ENCODE measurements at regions of chr12 and their contacts with region 1.

Region 1: GRCh38 chr12:113174461-113175384 is 10.6 kb downstream of the DDX54 start:
- DNase-seq: no peak
- H3K4me3 ChIP-seq: no peak overlapping the region
- H3K27ac ChIP-seq: no peak overlapping the region
- H3K27me3 ChIP-seq: no peaks in the 10 kb centered on the region
- CTCF ChIP-seq: peak; percentile 99

Region 2: DNA sequence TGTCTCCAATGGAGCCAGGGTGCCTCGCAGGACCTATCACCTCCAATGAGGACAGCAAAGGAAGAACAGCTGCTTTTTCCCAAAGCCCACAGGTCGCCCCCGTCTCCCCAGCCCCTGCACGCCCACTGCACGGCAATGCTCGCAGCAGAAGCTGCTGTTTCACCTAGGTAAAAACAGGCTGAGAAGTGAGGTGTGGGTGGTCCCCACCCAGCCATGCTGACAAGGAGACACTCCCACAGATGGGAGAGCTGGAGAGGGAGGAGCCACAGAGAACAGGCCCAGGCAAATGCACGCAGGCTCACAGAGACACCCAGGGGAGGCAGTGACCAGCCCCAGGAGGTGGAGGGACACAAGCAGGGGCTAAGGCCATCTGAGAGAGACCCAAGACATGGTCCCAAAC is 14.8 kb before region 1 on chr12:
- CTCF ChIA-PET with region 1: interaction called, 12 read pairs
- POLR2A ChIA-PET with region 1: interaction called, 3 read pairs
- DNase-seq: no peak
- H3K4me3 ChIP-seq: no peak overlapping the region
- H3K27ac ChIP-seq: no peak overlapping the region
- H3K27me3 ChIP-seq: peaks cover 7% of the 10 kb centered on the region
- CTCF ChIP-seq: no peak

Region 3: GRCh38 chr12:113184900-113185773 is 10.4 kb after region 1 on chr12 and contains the starts of genes DDX54 and RITA1:
- CTCF ChIA-PET with region 1: interaction called, 24 read pairs
- POLR2A ChIA-PET with region 1: no interaction called
- DNase-seq: peak; percentile 66
- H3K4me3 ChIP-seq: peak within 1 kb of the TSS; percentile 87
- H3K27ac ChIP-seq: peak within 1 kb of the TSS; percentile 89
- H3K27me3 ChIP-seq: no peaks in the 10 kb centered on the region
- CTCF ChIP-seq: no peak
- polyA plus RNA-seq, gene DDX54: 26.9 and 32.1 TPM in 2 replicates
- polyA plus RNA-seq, gene RITA1: 9.0 and 11.3 TPM in 2 replicates

Measured in AG04450 (cell line).